ENCODE measurements at regions of chr7 and their contacts with region 1.

Region 1: DNA sequence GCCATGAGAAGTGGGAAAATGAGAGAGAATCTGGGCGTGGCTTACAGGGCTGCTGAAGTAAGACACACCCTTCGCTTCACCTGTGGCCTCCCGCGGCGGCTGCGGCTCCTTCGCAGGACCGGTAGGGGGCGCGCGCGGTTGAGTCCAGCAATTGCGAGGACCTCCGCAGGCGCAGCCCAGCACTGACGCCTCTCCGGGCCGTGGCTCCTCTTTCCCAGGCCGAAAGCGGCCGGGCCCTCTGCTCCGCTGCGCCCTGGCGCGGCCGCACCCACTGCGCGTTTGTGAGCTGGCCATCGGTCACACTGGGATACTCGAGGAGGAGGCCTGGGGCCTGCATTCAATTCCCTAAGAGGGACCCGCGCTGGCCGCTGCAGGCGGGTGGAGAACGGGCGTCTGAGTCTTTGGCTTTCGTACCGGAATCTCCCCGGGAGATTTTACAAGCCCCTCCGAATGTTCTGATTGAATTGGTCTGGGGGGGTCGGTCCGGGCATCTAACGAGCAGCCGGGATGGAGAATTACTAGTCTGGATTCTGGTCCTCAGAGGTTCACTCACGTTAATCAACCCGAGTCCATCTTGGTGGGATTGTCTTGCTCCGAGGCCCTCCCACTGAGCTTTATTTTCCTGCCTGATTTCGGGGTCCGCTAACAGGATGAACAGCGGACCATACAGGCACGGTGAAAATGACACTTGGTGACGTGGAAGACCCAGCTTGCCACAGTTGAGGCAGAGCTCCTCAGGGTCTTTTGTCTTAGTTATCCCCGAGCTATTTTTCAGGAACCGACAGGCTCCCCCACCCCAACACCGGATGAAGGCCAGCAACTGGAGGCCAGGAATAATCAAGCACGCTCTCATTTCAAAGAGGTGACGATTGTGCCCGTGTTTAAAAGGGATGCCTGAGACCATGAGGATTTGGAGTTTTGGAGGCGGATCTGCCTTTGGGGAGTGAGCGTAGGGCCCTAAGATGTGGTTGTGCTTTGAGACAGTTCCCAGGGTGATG is at the start of gene LRRD1:
- DNase-seq: peak; percentile 95
- ATAC-seq: peak; percentile 100
- H3K4me3 Mint-ChIP-seq: peak within 1 kb of the TSS; percentile 72
- H3K27ac Mint-ChIP-seq: peak within 1 kb of the TSS; percentile 47
- H3K4me1 Mint-ChIP-seq: peaks cover 7% of the 10 kb centered on the region
- H3K27me3 Mint-ChIP-seq: peaks cover 5% of the 10 kb centered on the region
- total RNA-seq, gene LRRD1: not detected

Region 2: GRCh38 chr7:92461027-92462003 is 282.1 kb after region 1 on chr7:
- CTCF ChIA-PET with region 1: no interaction called
- POLR2A ChIA-PET with region 1: no interaction called
- intact Hi-C with region 1: loop called in 1 of 2 experiments (anchors 5 kb)
- DNase-seq: peak; percentile 56
- ATAC-seq: peak; percentile 74
- H3K4me3 Mint-ChIP-seq: no peak overlapping the region
- H3K27ac Mint-ChIP-seq: no peak overlapping the region
- H3K4me1 Mint-ChIP-seq: no peaks in the 10 kb centered on the region
- H3K27me3 Mint-ChIP-seq: no peaks in the 10 kb centered on the region

Measured in activated CD4-positive, alpha-beta T cell treated with anti-CD3 and anti-CD28 coated beads for 36 hours (primary cell).